ENCODE measurements at regions of chr19 and their contacts with region 1.

Region 1: DNA sequence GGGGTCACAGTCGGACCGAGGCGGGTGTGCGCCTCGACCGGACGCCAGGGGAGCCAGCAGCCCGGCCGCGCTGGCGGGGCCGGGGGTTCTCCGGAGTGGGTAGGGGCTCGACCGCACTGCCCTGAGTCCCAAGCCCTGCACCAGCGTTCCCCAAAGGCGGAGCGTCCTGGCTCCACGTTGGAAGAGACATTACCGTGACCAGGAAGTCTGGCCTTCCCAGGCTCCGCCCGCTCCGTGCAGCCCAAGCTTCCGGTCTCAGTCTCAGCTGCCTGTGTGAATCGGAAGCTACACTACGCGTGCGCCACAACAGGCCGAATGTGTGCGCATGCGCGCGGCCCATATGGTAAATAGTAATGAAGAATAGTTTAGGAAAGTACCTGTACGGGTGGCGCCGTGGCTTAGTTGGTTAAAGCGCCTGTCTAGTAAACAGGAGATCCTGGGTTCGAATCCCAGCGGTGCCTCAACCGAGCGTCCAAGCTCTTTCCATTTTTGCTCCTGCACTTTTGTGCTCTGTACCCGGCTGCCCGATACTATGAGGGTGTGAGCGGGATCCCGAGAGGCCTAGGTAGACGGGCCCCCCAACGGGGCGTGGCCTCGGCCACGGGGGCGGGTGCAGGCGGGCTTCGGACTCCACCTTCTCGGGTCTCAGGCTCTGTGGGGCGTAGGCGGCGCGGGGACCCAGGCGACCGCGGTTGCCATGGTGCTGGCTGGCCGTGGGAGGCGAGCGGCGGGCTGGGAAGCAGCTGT is 17.3 kb upstream of the LRP3 start:
- DNase-seq: peak; percentile 97
- ATAC-seq: peak; percentile 91
- H3K4me3 Mint-ChIP-seq: peak overlapping the region; percentile 86
- H3K27ac Mint-ChIP-seq: peak overlapping the region; percentile 92
- H3K4me1 Mint-ChIP-seq: peaks cover 37% of the 10 kb centered on the region
- H3K27me3 Mint-ChIP-seq: no peaks in the 10 kb centered on the region

Region 2: GRCh38 chr19:32580901-32581703 is 595.7 kb before region 1 on chr19 and contains the start of gene PDCD5:
- CTCF ChIA-PET with region 1: no interaction called
- POLR2A ChIA-PET with region 1: no interaction called
- intact Hi-C with region 1: loop called in 1 of 2 experiments (anchors 2 kb)
- DNase-seq: peak; percentile 99
- ATAC-seq: peak; percentile 90
- H3K4me3 Mint-ChIP-seq: peak within 1 kb of the TSS; percentile 92
- H3K27ac Mint-ChIP-seq: peak within 1 kb of the TSS; percentile 91
- H3K4me1 Mint-ChIP-seq: peaks cover 33% of the 10 kb centered on the region
- H3K27me3 Mint-ChIP-seq: peaks cover under 1% of the 10 kb centered on the region
- total RNA-seq, gene PDCD5: 268 to 272 TPM

Region 3: DNA sequence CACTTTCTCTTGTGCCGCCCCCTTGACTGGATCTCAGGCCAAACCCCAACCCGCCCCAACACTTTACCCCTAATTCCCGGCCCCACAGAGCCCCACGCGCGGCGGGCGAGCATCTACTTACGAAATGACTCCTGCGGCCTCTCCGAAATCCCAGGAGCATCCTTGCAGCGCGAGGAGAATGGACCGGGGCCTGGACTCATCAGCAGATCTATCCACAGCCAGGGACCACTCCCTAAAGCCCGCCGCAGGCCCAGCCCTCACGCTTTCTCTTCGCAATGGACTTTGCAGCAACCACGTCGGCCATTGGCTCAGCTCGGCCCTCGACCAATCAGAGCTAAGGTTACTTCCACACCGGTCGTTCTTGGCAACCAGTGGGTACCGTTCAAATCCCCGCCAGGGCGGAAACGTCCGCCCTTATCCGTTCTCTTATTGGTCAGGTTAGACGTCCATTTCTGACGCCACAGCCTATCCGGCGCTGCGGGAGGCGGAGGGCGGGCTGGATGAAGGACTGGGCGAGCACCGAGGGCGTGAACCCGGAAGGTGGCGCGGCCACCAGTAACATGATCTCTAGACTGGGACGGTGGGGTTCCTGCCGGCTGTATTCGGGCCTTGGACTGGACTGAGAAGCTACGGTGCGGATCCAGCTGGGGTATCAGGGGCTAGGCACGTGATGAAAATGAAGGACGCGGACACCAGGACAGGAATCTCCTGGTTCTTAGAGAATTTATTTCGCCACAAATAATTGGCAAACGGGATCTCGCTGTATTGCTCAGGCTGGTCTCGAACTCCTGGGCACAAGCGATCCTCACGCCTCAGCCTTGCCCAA is 204.9 kb before region 1 on chr19 and contains the starts of genes CEP89 and FAAP24:
- CTCF ChIA-PET with region 1: interaction called, 4 read pairs
- POLR2A ChIA-PET with region 1: no interaction called
- intact Hi-C with region 1: loop called (anchors 1 kb)
- DNase-seq: peak; percentile 98
- ATAC-seq: peak; percentile 100
- H3K4me3 Mint-ChIP-seq: peak within 1 kb of the TSS; percentile 98
- H3K27ac Mint-ChIP-seq: peak within 1 kb of the TSS; percentile 94
- H3K4me1 Mint-ChIP-seq: peaks cover 11% of the 10 kb centered on the region
- H3K27me3 Mint-ChIP-seq: no peaks in the 10 kb centered on the region
- total RNA-seq, gene CEP89: 16.2 to 18.5 TPM
- total RNA-seq, gene FAAP24: 8.9 to 11.9 TPM

Region 4: GRCh38 chr19:33125929-33126388 is 50.9 kb before region 1 on chr19:
- CTCF ChIA-PET with region 1: interaction called, 6 read pairs
- POLR2A ChIA-PET with region 1: interaction called, 4 read pairs
- intact Hi-C with region 1: loop called in 1 of 2 experiments (anchors 2 kb)
- DNase-seq: peak; percentile 76
- ATAC-seq: peak; percentile 96
- H3K4me3 Mint-ChIP-seq: no peak overlapping the region
- H3K27ac Mint-ChIP-seq: no peak overlapping the region
- H3K4me1 Mint-ChIP-seq: peaks cover 4% of the 10 kb centered on the region
- H3K27me3 Mint-ChIP-seq: no peaks in the 10 kb centered on the region

Region 5: GRCh38 chr19:33156334-33156733 is 20.5 kb before region 1 on chr19:
- CTCF ChIA-PET with region 1: interaction called, 18 read pairs
- POLR2A ChIA-PET with region 1: interaction called, 8 read pairs
- intact Hi-C with region 1: loop called (anchors 1 to 2 kb)
- DNase-seq: no peak
- ATAC-seq: no peak
- H3K4me3 Mint-ChIP-seq: no peak overlapping the region
- H3K27ac Mint-ChIP-seq: no peak overlapping the region
- H3K4me1 Mint-ChIP-seq: peaks cover 28% of the 10 kb centered on the region
- H3K27me3 Mint-ChIP-seq: no peaks in the 10 kb centered on the region

Region 6: DNA sequence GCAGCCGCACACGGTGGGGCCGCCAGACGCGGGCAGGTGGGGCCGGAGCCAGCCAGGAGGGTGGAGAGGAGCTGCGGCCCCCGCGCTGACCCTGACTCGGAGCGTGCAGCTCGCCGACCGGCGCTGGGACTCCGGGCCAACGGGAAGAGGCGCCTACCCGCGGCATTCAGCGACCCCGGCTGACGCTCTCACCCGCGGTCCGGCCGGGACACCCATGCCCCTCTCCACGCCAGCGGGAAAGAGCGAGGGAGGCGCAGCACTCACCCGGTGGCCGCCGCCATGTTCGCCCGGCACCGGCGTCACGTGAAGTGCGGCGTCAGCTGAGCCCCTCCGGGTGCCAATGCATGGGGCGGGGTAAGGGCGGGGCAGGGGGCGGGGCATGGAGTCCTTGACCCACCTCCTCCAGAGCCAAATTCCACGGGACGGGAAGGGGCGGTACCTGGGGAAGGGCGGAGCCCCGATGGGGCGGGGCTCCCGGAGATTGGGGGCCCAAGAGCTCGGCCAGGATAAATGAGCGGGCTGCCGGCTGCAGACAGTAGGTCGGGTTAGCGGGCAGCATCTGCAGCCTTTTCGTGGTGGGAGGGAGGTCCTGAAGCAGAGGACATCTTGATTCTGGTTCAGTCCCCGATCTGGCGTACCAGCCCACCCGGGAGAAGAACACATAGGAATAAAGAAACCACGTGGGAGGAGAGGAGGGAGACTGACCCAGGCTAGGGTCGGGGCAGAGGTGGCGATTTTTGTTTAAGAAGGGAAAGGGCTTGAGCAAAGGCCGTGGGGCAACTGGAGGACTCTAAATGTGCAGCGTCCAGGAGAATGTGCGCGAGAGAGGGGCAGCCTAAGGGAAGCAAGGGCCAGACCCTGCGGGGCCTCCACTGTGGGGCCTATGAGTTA is 344.9 kb after region 1 on chr19 and contains the start of gene PEPD:
- CTCF ChIA-PET with region 1: no interaction called
- POLR2A ChIA-PET with region 1: no interaction called
- intact Hi-C with region 1: loop called in 1 of 2 experiments (anchors 1 kb)
- DNase-seq: peak; percentile 95
- ATAC-seq: peak; percentile 97
- H3K4me3 Mint-ChIP-seq: peak within 1 kb of the TSS; percentile 89
- H3K27ac Mint-ChIP-seq: peak within 1 kb of the TSS; percentile 60
- H3K4me1 Mint-ChIP-seq: peaks cover 20% of the 10 kb centered on the region
- H3K27me3 Mint-ChIP-seq: no peaks in the 10 kb centered on the region
- total RNA-seq, gene PEPD: 26.9 to 37.4 TPM